WTC11 (cell line): ENCODE measurements at regions of chr9 and their contacts with region 1.

Region 1: DNA sequence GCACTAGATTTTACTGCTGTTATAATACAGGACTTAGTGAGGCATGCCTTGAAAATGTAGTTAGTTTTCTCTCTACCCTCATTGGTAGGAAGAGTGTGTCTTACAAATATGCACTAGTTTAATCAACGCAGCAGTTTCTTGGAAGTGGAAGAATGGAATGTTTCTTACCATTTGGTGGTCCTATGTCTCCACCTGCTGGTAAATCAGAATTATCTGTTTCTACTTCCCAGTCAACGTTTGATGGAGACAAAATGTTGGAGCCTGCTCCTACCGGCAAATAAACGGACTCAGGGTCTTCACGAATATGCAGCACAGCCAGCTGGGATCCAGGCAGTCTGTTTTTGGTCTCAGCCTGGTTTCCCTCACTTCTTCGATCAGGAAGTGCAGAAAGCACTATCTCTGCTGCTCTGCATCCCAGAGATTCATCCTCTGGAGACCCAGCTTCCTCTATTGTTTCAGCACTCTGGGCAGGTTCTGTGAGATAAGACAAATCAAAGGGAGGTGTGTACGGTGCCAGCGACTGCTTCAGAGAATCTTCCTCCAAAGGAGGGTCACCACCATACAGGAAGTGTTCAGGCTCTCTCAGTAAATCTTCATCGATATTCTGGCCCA is 59.5 kb upstream of the PCA3 start:
- DNase-seq: no peak
- ATAC-seq: peak; percentile 81
- H3K4me3 Mint-ChIP-seq: no peak overlapping the region
- H3K27ac Mint-ChIP-seq: no peak overlapping the region
- H3K4me1 Mint-ChIP-seq: peaks cover 11% of the 10 kb centered on the region
- H3K27me3 Mint-ChIP-seq: no peaks in the 10 kb centered on the region
- CTCF ChIP-seq: peak; percentile 54; the same call in 1 of the 2 replicates

Region 2: GRCh38 chr9:76658535-76659231 is 46.0 kb before region 1 on chr9:
- CTCF ChIA-PET with region 1: interaction called, 10 read pairs
- POLR2A ChIA-PET with region 1: no interaction called
- DNase-seq: no peak
- ATAC-seq: peak; percentile 91
- H3K4me3 Mint-ChIP-seq: no peak overlapping the region
- H3K27ac Mint-ChIP-seq: peak overlapping the region; percentile 58; the same call in 1 of the 2 replicates
- H3K4me1 Mint-ChIP-seq: peaks cover 21% of the 10 kb centered on the region
- H3K27me3 Mint-ChIP-seq: no peaks in the 10 kb centered on the region
- CTCF ChIP-seq: no peak

Region 3: GRCh38 chr9:76665458-76665857 is 39.2 kb before region 1 on chr9:
- CTCF ChIA-PET with region 1: interaction called, 11 read pairs
- POLR2A ChIA-PET with region 1: no interaction called
- DNase-seq: no peak
- ATAC-seq: no peak
- H3K4me3 Mint-ChIP-seq: no peak overlapping the region
- H3K27ac Mint-ChIP-seq: no peak overlapping the region
- H3K4me1 Mint-ChIP-seq: peaks cover 9% of the 10 kb centered on the region
- H3K27me3 Mint-ChIP-seq: no peaks in the 10 kb centered on the region; the same call in 1 of the 2 replicates
- CTCF ChIP-seq: no peak